ENCODE measurements at regions of chr17 and their contacts with region 1.

Region 1: DNA sequence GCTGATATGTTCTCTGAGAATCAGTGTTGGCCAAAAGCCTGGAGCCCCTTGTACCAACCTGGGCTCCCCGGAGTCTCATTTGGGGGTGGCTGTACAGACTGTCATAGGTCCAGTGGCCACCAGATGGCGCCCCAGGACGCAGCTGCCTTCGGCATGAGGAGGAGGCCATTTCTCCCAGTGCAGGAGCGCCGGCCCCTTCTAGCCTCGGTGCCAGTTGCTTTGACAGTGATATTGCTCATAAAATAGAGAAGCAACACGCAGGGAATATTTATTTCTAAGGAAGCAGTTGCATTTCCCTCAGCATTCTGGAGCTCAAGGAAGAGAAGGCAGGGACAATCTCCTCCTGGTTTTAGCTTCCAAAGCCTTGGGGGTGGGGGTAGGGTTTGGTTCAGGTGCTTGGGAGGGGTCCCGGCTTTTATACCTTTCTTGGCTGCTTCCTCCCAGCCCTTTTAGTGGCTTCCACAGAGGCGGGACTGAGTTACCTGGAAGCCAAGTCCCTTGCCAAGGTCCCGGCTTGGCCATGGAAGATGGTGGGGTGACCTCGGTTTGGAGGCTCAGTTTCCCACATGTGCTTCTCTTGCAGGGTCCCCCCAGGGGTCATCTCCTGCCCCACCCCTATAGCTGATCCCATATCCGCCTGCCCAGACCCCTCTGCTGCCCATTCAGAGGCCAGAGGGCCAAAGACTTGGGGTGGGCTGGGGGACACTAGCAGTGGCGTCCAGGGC is 117.8 kb upstream of the CDC42EP4 start:
- DNase-seq: peak; percentile 93
- H3K4me3 Mint-ChIP-seq: no peak overlapping the region
- H3K27ac Mint-ChIP-seq: no peak overlapping the region
- H3K4me1 Mint-ChIP-seq: peaks cover 3% of the 10 kb centered on the region
- H3K27me3 Mint-ChIP-seq: no peaks in the 10 kb centered on the region

Region 2: GRCh38 chr17:73261952-73262675 is 167.5 kb before region 1 on chr17:
- CTCF ChIA-PET with region 1: no interaction called
- intact Hi-C with region 1: no loop called
- DNase-seq: no peak
- H3K4me3 Mint-ChIP-seq: no peak overlapping the region
- H3K27ac Mint-ChIP-seq: no peak overlapping the region
- H3K4me1 Mint-ChIP-seq: no peaks in the 10 kb centered on the region
- H3K27me3 Mint-ChIP-seq: no peaks in the 10 kb centered on the region

Region 3: DNA sequence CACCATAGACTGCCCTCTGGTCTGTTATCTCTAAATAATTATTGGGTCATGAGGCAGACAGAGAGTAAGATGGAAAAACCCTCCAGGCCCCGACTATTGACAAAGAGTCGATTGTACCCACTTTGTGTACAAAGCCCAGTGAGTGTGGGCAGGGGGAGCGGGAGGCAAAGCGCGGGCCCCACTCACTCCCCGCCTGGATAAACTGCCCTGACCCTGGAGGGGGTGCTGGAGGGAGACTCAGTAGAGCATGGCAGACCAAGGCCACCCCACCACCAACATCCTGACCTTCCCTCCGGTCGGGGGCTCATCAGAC is 156.7 kb before region 1 on chr17:
- CTCF ChIA-PET with region 1: no interaction called
- intact Hi-C with region 1: no loop called
- DNase-seq: no peak
- H3K4me3 Mint-ChIP-seq: no peak overlapping the region
- H3K27ac Mint-ChIP-seq: no peak overlapping the region
- H3K4me1 Mint-ChIP-seq: no peaks in the 10 kb centered on the region
- H3K27me3 Mint-ChIP-seq: peaks cover 2% of the 10 kb centered on the region

Region 4: DNA sequence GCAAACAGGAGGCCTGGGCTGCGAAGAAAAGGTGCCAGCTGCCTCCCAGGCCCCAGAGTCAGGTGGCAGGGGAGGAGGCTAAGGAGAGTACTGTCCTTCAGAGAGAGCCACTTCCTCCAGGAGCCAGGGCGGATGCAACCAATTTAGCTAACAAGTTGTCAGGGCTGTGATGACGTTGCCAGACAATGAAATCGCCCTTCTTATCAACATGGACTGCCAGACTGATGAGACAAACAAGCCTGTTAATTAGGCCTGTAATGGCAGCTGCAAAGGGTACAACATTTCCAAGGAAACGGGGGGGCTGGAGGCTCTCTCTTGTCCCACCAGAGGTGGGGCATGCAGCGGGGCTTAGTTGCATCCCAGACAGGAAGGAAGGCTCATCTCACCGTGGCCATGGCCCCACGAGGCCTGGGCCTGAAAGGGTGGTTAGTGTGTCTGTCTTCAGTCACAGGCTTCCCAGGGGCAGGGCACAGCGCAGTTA is 102.9 kb after region 1 on chr17:
- CTCF ChIA-PET with region 1: no interaction called
- intact Hi-C with region 1: no loop called
- DNase-seq: no peak
- H3K4me3 Mint-ChIP-seq: no peak overlapping the region
- H3K27ac Mint-ChIP-seq: no peak overlapping the region
- H3K4me1 Mint-ChIP-seq: no peaks in the 10 kb centered on the region
- H3K27me3 Mint-ChIP-seq: no peaks in the 10 kb centered on the region

Region 5: GRCh38 chr17:73595479-73595878 is 165.9 kb after region 1 on chr17:
- CTCF ChIA-PET with region 1: no interaction called
- intact Hi-C with region 1: loop called (anchors 5 kb)
- DNase-seq: peak; percentile 55
- H3K4me3 Mint-ChIP-seq: no peak overlapping the region
- H3K27ac Mint-ChIP-seq: no peak overlapping the region
- H3K4me1 Mint-ChIP-seq: peaks cover 43% of the 10 kb centered on the region
- H3K27me3 Mint-ChIP-seq: no peaks in the 10 kb centered on the region

Region 6: GRCh38 chr17:73710095-73710592 is 280.5 kb after region 1 on chr17:
- CTCF ChIA-PET with region 1: interaction called, 42 read pairs
- intact Hi-C with region 1: loop called (anchors 1 kb)
- DNase-seq: peak; percentile 84
- H3K4me3 Mint-ChIP-seq: no peak overlapping the region
- H3K27ac Mint-ChIP-seq: no peak overlapping the region
- H3K4me1 Mint-ChIP-seq: peaks cover 6% of the 10 kb centered on the region
- H3K27me3 Mint-ChIP-seq: no peaks in the 10 kb centered on the region

Region 7: GRCh38 chr17:73956669-73957465 is 527.3 kb after region 1 on chr17:
- CTCF ChIA-PET with region 1: interaction called, 5 read pairs
- intact Hi-C with region 1: loop called (anchors 1 kb)
- DNase-seq: peak; percentile 67
- H3K4me3 Mint-ChIP-seq: no peak overlapping the region
- H3K27ac Mint-ChIP-seq: no peak overlapping the region
- H3K4me1 Mint-ChIP-seq: peaks cover 3% of the 10 kb centered on the region
- H3K27me3 Mint-ChIP-seq: peaks cover 3% of the 10 kb centered on the region

Region 8: DNA sequence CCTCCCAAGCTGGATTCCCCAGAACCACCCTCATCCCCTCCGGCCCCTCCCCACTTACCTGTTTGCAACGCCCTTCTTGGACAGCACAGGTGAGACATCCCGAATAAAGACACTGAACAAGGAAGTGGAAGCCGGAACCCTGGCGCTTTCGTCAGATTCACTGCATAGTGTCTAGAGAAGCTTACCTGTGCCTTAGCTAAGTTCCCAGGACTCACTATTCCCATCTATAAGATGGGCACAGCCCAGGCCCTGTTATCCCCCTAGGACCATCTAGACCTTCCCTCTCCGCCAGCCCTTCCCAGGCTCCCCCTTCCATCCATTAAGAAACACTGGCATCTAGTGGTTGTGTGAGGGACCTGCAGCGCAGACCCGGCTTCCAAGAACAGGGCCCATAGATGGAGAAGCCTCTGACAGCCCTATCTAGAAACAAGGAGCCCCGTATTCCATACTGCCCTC is 747.0 kb after region 1 on chr17:
- CTCF ChIA-PET with region 1: interaction called, 6 read pairs
- intact Hi-C with region 1: loop called (anchors 1 kb)
- DNase-seq: peak; percentile 67
- H3K4me3 Mint-ChIP-seq: no peak overlapping the region
- H3K27ac Mint-ChIP-seq: no peak overlapping the region
- H3K4me1 Mint-ChIP-seq: no peaks in the 10 kb centered on the region
- H3K27me3 Mint-ChIP-seq: peaks cover 13% of the 10 kb centered on the region

Measured in activated naive CD4-positive, alpha-beta T cell treated with anti-CD3 and anti-CD28 coated beads for 36 hours (primary cell).